CD8-positive, alpha-beta T cell (primary cell): ENCODE measurements at regions of chr9 and their contacts with region 1.

Region 1: DNA sequence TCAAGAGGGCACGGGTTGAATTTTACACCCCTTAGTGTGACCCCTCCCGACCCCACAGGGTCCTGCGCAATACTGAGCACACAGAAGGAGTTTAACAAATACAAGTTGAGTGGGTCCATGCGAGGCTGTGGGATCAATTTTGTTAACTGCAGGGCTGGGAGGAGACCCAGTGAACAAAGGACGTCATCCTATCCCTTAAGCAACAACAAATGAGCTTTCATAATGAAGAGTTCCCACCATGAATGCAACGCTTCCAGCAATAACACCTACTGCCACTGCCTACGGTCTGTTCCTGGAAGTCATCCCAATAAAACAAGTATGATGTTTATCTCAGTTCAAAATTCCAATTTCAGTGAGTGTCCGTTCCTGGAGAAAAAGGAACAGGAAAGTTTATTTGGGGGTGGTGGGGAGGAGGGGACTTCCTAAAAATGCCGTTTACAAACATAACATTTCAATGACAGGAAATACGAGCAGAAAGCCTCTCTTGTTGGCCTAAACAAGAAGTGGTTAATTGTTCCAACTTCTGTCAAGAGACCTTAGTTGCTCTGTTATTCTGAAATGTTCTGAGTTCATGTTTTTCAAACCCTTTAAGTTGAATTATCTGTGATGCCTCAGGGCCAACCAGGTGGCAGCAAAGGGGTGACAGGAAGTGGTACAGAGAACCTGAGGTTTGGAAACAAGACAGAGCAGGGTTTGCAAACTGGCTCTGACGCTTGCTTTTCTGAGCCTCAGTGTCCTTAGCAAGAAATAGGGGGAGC is 65.8 kb upstream of the PLPP6 start:
- DNase-seq: peak; percentile 21 to 87 (median 61)
- ATAC-seq: peak; percentile 90
- H3K4me3 ChIP-seq: no peak overlapping the region
- H3K4me3 Mint-ChIP-seq: peak overlapping the region; percentile 62
- H3K27ac ChIP-seq: peak overlapping the region; percentile 57 to 68
- H3K27ac Mint-ChIP-seq: peak overlapping the region; percentile 98
- H3K4me1 ChIP-seq: peaks cover 49% of the 10 kb centered on the region
- H3K4me1 Mint-ChIP-seq: peaks cover 61% of the 10 kb centered on the region
- H3K27me3 ChIP-seq: no peaks in the 10 kb centered on the region
- H3K27me3 Mint-ChIP-seq: no peaks in the 10 kb centered on the region
- CTCF ChIP-seq: peak; percentile 8

Region 2: GRCh38 chr9:3863111-3863528 is 733.2 kb before region 1 on chr9:
- CTCF ChIA-PET with region 1: no interaction called
- POLR2A ChIA-PET with region 1: no interaction called
- intact Hi-C with region 1: no loop called
- DNase-seq: no peak
- ATAC-seq: no peak
- H3K4me3 ChIP-seq: no peak overlapping the region
- H3K4me3 Mint-ChIP-seq: no peak overlapping the region
- H3K27ac ChIP-seq: no peak overlapping the region
- H3K27ac Mint-ChIP-seq: no peak overlapping the region
- H3K4me1 ChIP-seq: no peaks in the 10 kb centered on the region
- H3K4me1 Mint-ChIP-seq: no peaks in the 10 kb centered on the region
- H3K27me3 ChIP-seq: no peaks in the 10 kb centered on the region
- H3K27me3 Mint-ChIP-seq: peaks cover 4% of the 10 kb centered on the region
- CTCF ChIP-seq: no peak

Region 3: DNA sequence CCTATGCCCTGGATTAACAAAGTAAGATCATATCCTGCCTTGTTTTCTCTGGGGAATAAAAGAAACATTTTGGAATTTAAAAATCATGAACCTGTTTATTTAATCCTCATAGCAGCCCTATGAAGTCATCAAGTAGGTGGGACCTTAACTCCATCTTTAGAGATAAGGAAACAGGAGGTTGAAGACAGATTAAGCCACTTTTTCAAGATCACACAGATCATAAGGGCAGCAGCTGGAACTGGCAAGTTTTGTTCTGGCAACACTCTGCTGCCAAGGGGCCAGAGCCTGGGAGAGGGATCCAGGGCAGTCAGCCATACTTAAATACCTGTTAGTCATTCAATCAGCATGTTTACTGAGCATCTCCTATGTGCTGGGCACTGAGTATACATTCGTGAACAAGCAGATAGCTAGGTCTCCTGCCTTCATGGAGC is 42.4 kb before region 1 on chr9:
- CTCF ChIA-PET with region 1: interaction called, 3 read pairs
- POLR2A ChIA-PET with region 1: no interaction called
- intact Hi-C with region 1: loop called in 1 of 2 experiments (anchors 5 kb)
- DNase-seq: no peak
- ATAC-seq: no peak
- H3K4me3 ChIP-seq: no peak overlapping the region
- H3K4me3 Mint-ChIP-seq: no peak overlapping the region
- H3K27ac ChIP-seq: no peak overlapping the region
- H3K27ac Mint-ChIP-seq: no peak overlapping the region
- H3K4me1 ChIP-seq: peaks cover 20% of the 10 kb centered on the region
- H3K4me1 Mint-ChIP-seq: peaks cover 46% of the 10 kb centered on the region
- H3K27me3 ChIP-seq: no peaks in the 10 kb centered on the region
- H3K27me3 Mint-ChIP-seq: no peaks in the 10 kb centered on the region
- CTCF ChIP-seq: no peak

Region 4: GRCh38 chr9:4620057-4620760 is 23.9 kb after region 1 on chr9:
- CTCF ChIA-PET with region 1: no interaction called
- POLR2A ChIA-PET with region 1: no interaction called
- intact Hi-C with region 1: no loop called
- DNase-seq: peak in 2 of 9 experiments; percentile 15 to 20
- ATAC-seq: peak; percentile 20
- H3K4me3 ChIP-seq: no peak overlapping the region
- H3K4me3 Mint-ChIP-seq: no peak overlapping the region
- H3K27ac ChIP-seq: no peak overlapping the region
- H3K27ac Mint-ChIP-seq: no peak overlapping the region
- H3K4me1 ChIP-seq: peaks cover 12% of the 10 kb centered on the region
- H3K4me1 Mint-ChIP-seq: peaks cover 26% of the 10 kb centered on the region
- H3K27me3 ChIP-seq: no peaks in the 10 kb centered on the region
- H3K27me3 Mint-ChIP-seq: no peaks in the 10 kb centered on the region
- CTCF ChIP-seq: no peak

Region 5: GRCh38 chr9:4740638-4741364 is 144.5 kb after region 1 on chr9 and contains the start of gene AK3:
- CTCF ChIA-PET with region 1: no interaction called
- POLR2A ChIA-PET with region 1: no interaction called
- intact Hi-C with region 1: loop called (anchors 2 to 5 kb)
- DNase-seq: peak; percentile 71 to 94 (median 86)
- ATAC-seq: peak; percentile 93
- H3K4me3 ChIP-seq: peak within 1 kb of the TSS; percentile 76 to 97
- H3K4me3 Mint-ChIP-seq: peak within 1 kb of the TSS; percentile 87
- H3K27ac ChIP-seq: peak within 1 kb of the TSS; percentile 70 to 86
- H3K27ac Mint-ChIP-seq: peak within 1 kb of the TSS; percentile 96
- H3K4me1 ChIP-seq: peaks cover 30% of the 10 kb centered on the region
- H3K4me1 Mint-ChIP-seq: peaks cover 37% of the 10 kb centered on the region
- H3K27me3 ChIP-seq: no peaks in the 10 kb centered on the region
- H3K27me3 Mint-ChIP-seq: no peaks in the 10 kb centered on the region
- CTCF ChIP-seq: no peak
- total RNA-seq, gene AK3: 15.2 to 18.8 TPM